Heart right ventricle (tissue), 16 donors: ENCODE measurements at regions of chr1 and their contacts with region 1.

Region 1: DNA sequence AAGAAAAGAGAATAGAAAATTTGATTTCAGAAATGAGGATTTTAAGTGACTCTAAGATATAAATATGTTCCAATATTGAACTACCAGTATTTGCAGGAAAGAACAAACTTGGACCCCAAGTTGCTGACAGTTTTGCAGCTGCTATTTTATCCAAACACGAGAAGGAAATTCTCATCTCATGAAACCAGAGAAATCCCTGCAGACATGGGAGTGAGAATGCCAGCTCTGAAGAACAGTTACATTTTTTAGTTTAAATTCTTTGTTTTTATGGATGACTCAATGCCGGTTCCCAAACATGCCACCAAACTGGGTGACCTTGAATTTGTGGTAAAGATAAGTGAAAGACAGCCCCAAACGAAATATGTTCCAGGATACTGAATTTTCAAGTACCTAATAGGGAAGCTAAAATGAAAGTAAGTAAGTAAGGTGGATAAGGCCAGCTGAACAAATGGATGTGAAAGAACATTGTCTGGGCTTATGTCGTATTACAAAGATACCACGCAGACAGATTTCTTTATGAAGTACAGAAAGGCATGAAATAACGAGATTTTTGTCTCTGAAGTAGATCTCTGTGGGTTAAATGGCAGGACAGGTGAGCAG is 19.9 kb downstream of the TLR5 start:
- DNase-seq: no peak
- ATAC-seq: no peak
- H3K4me3 ChIP-seq: peak overlapping the region in 3 of 10 donors; percentile 13 to 15 (median 14)
- H3K27ac ChIP-seq: peak overlapping the region in 2 of 10 donors; percentile 4 to 16
- H3K4me1 ChIP-seq: peaks cover 0 to 7% (median 0%) of the 10 kb centered on the region in 9 donors
- H3K27me3 ChIP-seq: no peaks in the 10 kb centered on the region
- CTCF ChIP-seq: no peak

Region 2: GRCh38 chr1:222736972-222737371 is 386.1 kb before region 1 on chr1 and contains the start of gene FAM177B:
- intact Hi-C with region 1: loop called in 1 of 10 experiments (anchors 5 kb)
- DNase-seq: no peak
- ATAC-seq: no peak
- H3K4me3 ChIP-seq: no peak within 1 kb of the TSS
- H3K27ac ChIP-seq: no peak within 1 kb of the TSS
- H3K4me1 ChIP-seq: no peaks in the 10 kb centered on the region
- H3K27me3 ChIP-seq: no peaks in the 10 kb centered on the region
- CTCF ChIP-seq: no peak
- total RNA-seq, gene FAM177B: not detected

Region 3: DNA sequence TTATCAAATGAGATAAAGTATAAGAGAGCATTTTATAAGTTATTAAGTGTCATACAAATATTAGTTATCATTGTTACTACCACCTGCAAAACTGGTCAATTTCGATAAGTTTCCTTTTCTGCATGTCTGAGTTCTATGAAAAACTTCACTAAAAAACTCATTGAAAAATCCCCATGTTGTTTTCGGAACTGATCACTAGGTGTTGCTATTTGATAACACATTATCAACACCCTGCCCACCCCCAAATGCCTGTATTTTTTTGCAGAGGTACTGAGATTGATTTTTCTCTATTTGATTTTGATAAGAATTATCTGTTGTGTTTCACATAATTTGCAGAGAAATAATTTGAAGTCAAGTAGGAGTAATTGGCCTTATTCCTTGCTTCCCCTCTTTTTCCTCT is 330.4 kb before region 1 on chr1:
- intact Hi-C with region 1: loop called in 5 of 10 experiments (anchors 2 to 5 kb)
- DNase-seq: no peak
- ATAC-seq: peak in 1 of 8 donors; percentile 57
- H3K4me3 ChIP-seq: no peak overlapping the region
- H3K27ac ChIP-seq: no peak overlapping the region
- H3K4me1 ChIP-seq: peaks cover 0 to 4% (median 0%) of the 10 kb centered on the region in 9 donors
- H3K27me3 ChIP-seq: no peaks in the 10 kb centered on the region
- CTCF ChIP-seq: peak; percentile 14 to 75 (median 63)

Region 4: GRCh38 chr1:223081181-223081994 is 41.7 kb before region 1 on chr1:
- intact Hi-C with region 1: loop called in 6 of 10 experiments (anchors 5 kb)
- DNase-seq: peak; percentile 87 to 89
- ATAC-seq: peak; percentile 88 to 94 (median 92)
- H3K4me3 ChIP-seq: peak overlapping the region in 9 of 10 donors; percentile 25 to 54 (median 45)
- H3K27ac ChIP-seq: peak overlapping the region; percentile 55 to 85 (median 70)
- H3K4me1 ChIP-seq: peaks cover 11 to 38% (median 21%) of the 10 kb centered on the region in 9 donors
- H3K27me3 ChIP-seq: no peaks in the 10 kb centered on the region
- CTCF ChIP-seq: peak; percentile 94 to 99 (median 97)

Region 5: DNA sequence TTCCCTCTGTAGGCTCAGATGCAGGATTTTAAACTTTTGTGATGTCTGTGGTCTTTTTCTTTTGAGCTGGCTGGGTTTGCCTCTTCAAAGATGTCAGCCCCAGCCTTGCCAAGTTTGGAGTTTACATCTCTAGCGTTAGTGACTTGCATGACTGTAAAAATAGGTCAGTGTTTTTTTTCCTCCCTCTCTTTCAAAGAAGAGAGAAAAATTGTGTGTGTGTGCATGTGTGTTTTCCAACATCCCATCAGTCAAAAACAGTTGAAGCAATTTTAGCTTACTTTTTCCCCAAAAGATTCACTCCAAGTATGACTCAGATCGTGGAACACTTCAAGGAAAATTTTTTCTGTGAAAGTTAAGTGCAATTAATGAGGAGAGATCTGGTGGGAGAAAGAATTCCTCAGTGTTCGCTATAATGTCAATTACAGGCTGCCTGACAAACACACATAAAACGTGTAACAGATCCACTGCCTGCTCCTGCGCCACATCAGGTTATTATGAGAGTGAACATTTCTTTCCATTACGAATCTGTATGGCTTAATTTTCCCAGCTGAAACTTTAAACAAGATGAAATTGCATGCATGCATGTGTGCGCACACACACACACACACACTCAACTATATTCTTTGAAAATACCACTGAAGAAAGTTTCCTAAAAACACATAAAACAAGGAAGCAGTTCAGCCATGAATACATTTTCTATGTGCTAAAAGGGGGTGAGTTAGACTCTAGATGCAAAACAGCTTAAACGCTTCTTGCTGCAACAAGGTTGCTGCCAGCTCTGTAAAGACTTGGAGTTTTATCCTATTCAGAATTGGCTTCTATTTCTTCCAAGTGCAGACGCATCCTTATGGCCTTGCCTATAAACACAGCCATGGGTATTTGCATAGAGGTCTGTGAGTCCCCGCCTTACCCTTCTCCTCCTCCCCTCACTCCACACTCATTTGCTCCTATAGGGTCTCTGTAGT is 35.5 kb before region 1 on chr1:
- intact Hi-C with region 1: loop called in 6 of 10 experiments (anchors 5 kb)
- DNase-seq: peak in 1 of 2 donors; percentile 34
- ATAC-seq: peak in 5 of 8 donors; percentile 16 to 41 (median 25)
- H3K4me3 ChIP-seq: peak overlapping the region in 2 of 10 donors; percentile 5 to 13
- H3K27ac ChIP-seq: peak overlapping the region in 7 of 10 donors; percentile 27 to 62 (median 48)
- H3K4me1 ChIP-seq: peaks cover 0 to 20% (median 5%) of the 10 kb centered on the region in 9 donors
- H3K27me3 ChIP-seq: no peaks in the 10 kb centered on the region
- CTCF ChIP-seq: no peak